H1 (cell line): ENCODE measurements at regions of chr11 and their contacts with region 1.

Region 1: GRCh38 chr11:120854988-120855387 is 168.9 kb upstream of the TBCEL start:
- DNase-seq: no peak
- H3K4me3 ChIP-seq: no peak overlapping the region
- H3K27ac ChIP-seq: no peak overlapping the region
- H3K4me1 ChIP-seq: peaks cover 0 to 3% (median 0%) of the 10 kb centered on the region in 4 experiments; a peak in 2 of 7 replicates
- H3K27me3 ChIP-seq: no peaks in the 10 kb centered on the region
- CTCF ChIP-seq: no peak
- EP300 ChIP-seq: no peak
- POLR2A ChIP-seq: no peak
- RAD21 ChIP-seq: no peak

Region 2: DNA sequence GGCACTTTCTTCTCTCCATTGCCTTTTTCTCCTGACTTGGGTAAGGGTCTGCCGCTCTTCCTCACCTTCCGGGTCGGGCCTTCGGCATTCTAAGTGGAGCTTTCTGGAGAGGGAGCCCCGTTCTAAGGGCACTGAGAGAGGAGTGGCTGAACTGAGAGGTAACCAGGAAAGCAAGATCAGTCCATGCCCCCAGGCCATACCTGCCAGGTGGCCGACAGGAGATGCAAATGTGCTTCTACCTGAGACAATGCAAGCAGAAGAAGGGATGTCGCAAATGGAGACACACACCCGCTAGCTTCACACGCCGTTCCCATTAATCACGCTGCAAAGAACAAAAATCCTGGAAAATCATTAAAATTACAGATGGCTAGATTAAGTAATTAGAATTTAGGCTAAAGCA is 12.5 kb after region 1 on chr11:
- CTCF ChIA-PET with region 1: interaction called, 10 read pairs
- POLR2A ChIA-PET with region 1: interaction called, 3 read pairs
- DNase-seq: peak in 1 of 2 experiments; percentile 51
- H3K4me3 ChIP-seq: no peak overlapping the region
- H3K27ac ChIP-seq: no peak overlapping the region
- H3K4me1 ChIP-seq: no peaks in the 10 kb centered on the region
- H3K27me3 ChIP-seq: no peaks in the 10 kb centered on the region; a peak in 1 of 7 replicates
- CTCF ChIP-seq: no peak
- EP300 ChIP-seq: no peak
- POLR2A ChIP-seq: no peak
- RAD21 ChIP-seq: no peak

Region 3: DNA sequence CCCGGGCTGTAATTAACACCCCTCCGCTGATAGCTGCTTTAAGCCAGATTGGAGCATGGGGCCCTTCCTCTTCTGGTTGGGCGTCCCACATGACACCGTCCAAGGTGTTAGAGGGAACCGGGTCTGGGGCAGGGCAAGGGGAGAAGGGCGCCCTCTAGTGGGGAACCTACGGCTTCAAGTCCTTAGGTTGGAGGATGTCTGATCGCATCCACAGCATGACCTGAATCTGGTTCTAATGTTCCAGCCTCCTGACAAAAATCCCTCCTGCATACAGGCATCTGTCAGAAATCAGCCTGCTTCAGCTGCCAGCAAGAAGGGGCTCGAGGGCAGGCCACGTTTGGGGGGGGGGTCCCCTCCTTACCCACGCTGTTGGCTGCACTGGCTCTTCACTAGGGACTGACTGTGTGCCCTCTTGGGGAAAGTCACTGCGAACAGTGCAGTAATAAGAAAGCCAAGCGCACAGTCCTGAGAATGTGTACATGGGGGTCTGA is 74.7 kb after region 1 on chr11:
- CTCF ChIA-PET with region 1: interaction called, 10 read pairs
- POLR2A ChIA-PET with region 1: no interaction called
- DNase-seq: peak; percentile 73 to 88
- H3K4me3 ChIP-seq: no peak overlapping the region
- H3K27ac ChIP-seq: no peak overlapping the region
- H3K4me1 ChIP-seq: peaks cover 0 to 8% (median 0%) of the 10 kb centered on the region in 4 experiments; a peak in 3 of 7 replicates
- H3K27me3 ChIP-seq: peaks cover 0 to 3% (median 0%) of the 10 kb centered on the region in 4 experiments; a peak in 1 of 7 replicates
- CTCF ChIP-seq: peak; percentile 92 to 93 (median 93)
- EP300 ChIP-seq: no peak
- POLR2A ChIP-seq: no peak
- RAD21 ChIP-seq: peak; percentile 86 to 90